ENCODE measurements at regions of chr10 and their contacts with region 1.

Region 1: GRCh38 chr10:13087986-13088618 is 11.9 kb upstream of the OPTN start:
- DNase-seq: peak; percentile 55
- H3K4me3 ChIP-seq: no peak overlapping the region
- H3K27me3 ChIP-seq: no peaks in the 10 kb centered on the region
- CTCF ChIP-seq: no peak

Region 2: GRCh38 chr10:13074561-13075451 is 13.3 kb before region 1 on chr10:
- CTCF ChIA-PET with region 1: interaction called, 13 read pairs
- POLR2A ChIA-PET with region 1: no interaction called
- DNase-seq: no peak
- H3K4me3 ChIP-seq: no peak overlapping the region
- H3K27me3 ChIP-seq: no peaks in the 10 kb centered on the region
- CTCF ChIP-seq: peak; percentile 93

Region 3: GRCh38 chr10:13099666-13100348 is 11.7 kb after region 1 on chr10 and contains the start of gene OPTN:
- CTCF ChIA-PET with region 1: interaction called, 17 read pairs
- POLR2A ChIA-PET with region 1: interaction called, 3 read pairs
- DNase-seq: no peak
- H3K4me3 ChIP-seq: peak within 1 kb of the TSS; percentile 95
- H3K27me3 ChIP-seq: no peaks in the 10 kb centered on the region
- CTCF ChIP-seq: peak; percentile 79
- polyA plus RNA-seq, gene OPTN: 58.0 and 59.1 TPM in 2 replicates

Measured in BJ (cell line).